ENCODE measurements at regions of chr2 and their contacts with region 1.

Region 1: GRCh38 chr2:162007447-162008040 is 66.5 kb downstream of the DPP4 start:
- DNase-seq: no peak
- H3K4me3 ChIP-seq: no peak overlapping the region
- H3K27ac ChIP-seq: no peak overlapping the region
- H3K4me1 ChIP-seq: peaks cover 3% of the 10 kb centered on the region
- H3K27me3 ChIP-seq: no peaks in the 10 kb centered on the region
- CTCF ChIP-seq: peak; percentile 67

Region 2: DNA sequence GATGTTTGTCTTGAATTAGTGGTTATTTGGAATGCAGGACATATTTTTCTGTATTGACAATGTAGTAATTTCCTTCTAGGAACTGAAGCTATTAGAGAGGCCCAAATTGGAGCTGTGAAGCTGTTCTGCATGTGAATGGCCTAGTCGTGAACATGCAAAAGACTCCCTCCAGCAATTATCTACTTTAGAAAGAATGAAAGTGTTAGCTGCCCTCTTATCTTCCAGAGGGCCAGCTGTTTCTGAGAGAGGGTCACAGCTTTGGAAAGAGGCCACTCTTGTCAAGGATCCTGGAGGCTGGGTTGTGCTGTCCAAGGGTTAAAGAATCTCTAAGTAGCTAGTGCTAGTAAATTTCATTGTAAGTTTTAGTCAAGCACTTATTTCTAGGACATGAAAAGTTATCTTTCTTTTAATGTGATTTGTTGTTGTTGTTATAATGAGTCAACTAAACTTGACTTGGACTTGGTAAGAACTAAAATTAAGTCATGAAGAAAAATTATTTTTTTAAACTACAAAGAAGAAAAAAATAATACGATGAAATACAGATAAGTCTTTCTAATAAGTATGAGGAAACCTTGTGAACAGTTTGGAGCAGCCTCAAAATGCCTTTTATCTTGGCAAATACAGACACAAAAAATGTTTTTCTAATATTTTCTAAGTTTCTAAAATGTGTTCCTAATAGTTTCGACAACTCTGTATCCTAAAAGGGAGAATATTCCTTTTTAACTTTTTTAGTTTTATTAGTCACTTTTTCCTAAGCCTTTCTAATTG is 29.7 kb after region 1 on chr2:
- intact Hi-C with region 1: no loop called
- DNase-seq: no peak
- H3K4me3 ChIP-seq: no peak overlapping the region
- H3K27ac ChIP-seq: no peak overlapping the region
- H3K4me1 ChIP-seq: no peaks in the 10 kb centered on the region
- H3K27me3 ChIP-seq: no peaks in the 10 kb centered on the region
- CTCF ChIP-seq: no peak

Region 3: DNA sequence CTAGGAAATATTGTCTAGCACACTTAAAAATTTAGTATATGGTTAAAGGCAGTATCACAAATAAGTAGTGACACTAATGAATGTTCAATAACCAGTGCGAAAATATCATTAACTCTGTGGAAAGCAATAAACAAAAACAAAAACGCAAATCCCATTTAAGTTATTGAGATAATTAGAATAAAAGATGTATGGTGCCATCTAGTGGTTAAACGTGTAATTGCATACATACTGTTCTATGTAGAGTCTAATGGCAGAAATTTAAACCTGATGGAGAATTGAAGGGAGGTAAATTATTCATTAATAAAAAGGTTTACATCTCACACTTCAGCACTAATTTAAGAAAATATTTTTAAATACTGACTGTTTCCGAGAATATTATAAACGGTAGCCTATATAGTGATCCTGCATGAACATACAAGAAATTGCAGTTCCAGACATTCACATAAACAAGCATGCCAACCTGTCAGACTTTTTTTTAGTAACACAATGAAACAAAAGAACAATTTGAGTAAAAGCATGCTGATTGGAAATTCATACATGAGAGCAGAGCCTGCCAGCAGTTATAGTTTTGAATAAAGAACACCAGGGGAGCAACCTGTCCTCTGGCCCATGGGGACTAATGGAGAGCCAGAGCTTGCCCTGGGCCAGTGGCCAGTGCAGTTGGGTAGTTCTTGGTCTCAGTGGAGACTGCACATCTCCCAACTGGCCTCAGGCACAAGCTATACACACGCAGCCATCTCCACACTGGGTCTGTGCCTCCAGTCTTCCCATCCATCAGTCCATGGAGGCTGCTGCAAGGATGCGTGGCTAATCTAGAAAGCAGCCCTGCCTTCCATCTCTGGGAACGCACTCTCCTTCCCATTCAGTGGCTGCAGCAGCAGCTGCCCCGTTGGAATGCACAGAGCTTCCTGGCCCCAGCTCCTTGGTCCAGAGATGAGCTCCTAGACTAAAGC is 116.5 kb after region 1 on chr2:
- intact Hi-C with region 1: loop called (anchors 5 kb)
- DNase-seq: no peak
- H3K4me3 ChIP-seq: no peak overlapping the region
- H3K27ac ChIP-seq: no peak overlapping the region
- H3K4me1 ChIP-seq: no peaks in the 10 kb centered on the region
- H3K27me3 ChIP-seq: no peaks in the 10 kb centered on the region
- CTCF ChIP-seq: peak; percentile 83